Left cardiac atrium (tissue), 4 donors: ENCODE measurements at regions of chr11 and their contacts with region 1.

Region 1: DNA sequence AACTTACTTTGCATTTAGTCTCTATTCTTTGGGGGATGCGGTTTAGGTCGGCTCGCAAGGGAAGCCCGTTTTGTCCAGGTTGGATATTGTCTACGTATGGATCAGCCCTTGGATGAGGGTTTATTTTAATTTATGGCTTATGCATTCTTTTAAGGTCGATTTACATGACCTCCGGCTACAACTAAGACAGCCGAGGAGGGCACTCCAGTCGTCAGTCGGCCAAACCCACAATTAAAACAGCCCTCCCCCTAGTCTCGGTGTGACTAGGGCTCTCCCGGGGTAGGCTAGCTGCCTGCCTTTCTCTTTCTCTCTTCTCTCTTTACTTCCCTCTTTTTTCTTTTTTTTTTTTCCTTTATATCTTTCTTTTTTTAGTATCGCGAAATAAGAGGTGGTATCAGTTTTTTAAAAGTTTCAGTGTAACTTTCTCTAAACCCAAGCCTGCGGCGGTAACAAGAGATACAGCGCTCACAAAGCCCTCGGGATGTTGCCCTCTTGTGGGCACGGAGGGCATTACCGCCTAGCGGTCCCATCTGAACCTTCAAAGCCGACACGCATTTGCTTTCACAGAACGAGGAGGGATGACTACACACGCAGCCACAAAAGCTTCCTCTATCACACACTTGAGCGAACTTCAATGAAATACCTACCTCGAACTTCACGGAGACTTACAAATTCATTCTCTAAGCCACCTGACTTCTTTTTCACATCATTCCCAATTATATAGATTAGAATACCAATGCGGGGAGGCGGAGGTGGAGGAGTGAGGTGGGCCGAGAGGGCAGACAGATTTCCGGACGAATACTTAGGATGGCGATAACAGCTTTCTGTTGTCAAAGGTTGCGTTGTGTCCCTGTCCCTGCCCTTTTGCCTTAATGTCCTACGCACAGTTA is 132.3 kb upstream of the C11orf58 start:
- DNase-seq: peak; percentile 90
- ATAC-seq: peak; percentile 50 to 60

Region 2: GRCh38 chr11:16169541-16169940 is 436.6 kb before region 1 on chr11:
- intact Hi-C with region 1: no loop called
- DNase-seq: no peak
- ATAC-seq: no peak

Region 3: DNA sequence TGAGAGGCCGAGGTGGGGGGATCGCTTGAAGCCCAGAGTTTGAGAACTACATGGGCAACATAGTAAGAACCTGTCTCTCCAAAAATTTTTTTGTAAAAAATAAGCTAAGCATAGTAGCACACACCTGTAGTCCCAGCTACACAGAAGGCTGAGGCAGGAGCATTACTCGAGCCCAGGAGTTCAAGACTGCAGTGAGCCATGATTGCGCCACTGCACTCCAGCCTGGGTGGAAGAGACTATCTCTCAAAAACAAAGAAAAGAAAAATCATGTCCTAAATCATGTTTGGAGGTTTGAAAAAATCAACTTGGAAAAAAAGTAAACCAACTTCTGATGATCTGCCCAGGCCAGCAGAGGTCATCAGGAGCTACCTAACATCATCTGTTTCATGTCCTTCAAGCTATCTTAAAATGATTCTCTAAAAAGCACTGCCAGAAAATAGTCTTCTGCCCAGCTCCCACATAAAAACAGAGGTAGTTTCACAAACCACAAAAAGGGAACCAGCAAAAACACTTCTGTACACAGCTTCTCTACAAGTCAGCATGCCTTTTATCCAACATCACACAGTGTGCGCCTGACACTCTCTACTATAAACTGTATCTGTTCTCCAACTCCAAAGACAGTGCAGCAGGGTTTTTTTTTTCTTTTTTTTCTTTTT is 414.8 kb before region 1 on chr11:
- intact Hi-C with region 1: loop called in 1 of 2 experiments (anchors 5 kb)
- DNase-seq: no peak
- ATAC-seq: peak in 1 of 2 donors; percentile 15

Region 4: DNA sequence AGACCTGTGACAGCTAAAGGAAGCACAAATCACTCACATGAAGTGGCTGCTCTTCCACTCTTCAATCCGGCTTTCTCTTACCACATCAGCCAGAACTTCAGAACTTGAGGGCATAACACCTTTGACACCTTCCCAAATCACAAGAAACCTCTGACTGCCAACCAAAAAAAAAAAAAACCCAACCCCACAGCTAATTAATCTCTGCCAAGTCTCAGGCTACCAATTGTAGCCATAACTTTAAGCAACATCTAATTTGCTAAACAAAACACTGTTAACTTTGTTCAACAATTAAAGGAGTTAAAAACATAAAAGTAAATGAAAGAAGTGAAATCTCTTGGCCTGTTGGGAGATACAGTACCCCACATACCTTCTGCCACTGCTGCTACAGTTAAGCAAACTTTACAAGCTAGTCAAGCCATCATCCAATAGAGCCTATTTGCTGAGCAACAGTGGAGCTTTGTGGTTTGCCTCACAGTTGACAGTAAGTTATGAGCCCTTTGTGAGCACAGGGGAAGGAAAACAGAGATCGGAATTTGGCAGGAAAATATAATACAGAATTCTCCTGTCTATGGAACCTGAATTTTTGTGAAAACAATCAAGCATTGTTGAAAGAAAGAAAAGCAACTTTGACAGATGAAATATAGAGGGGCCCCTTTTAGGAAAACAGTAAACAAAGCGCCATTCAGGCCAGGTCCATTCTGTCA is 249.9 kb before region 1 on chr11 and contains the start of gene SOX6:
- intact Hi-C with region 1: loop called in 1 of 2 experiments (anchors 10 kb)
- DNase-seq: no peak
- ATAC-seq: peak in 1 of 2 donors; percentile 73
- total RNA-seq, gene SOX6: 13.6 to 19.8 TPM